PC-9 (cell line): ENCODE measurements at regions of chr4 and their contacts with region 1.

Region 1: GRCh38 chr4:145481164-145481941 is at the start of gene SMAD1:
- DNase-seq: peak; percentile 38 to 74
- H3K4me3 ChIP-seq: peak within 1 kb of the TSS; percentile 86
- H3K27ac ChIP-seq: peak within 1 kb of the TSS; percentile 71
- H3K4me1 ChIP-seq: peaks cover 22% of the 10 kb centered on the region
- H3K27me3 ChIP-seq: no peaks in the 10 kb centered on the region
- CTCF ChIP-seq: no peak
- total RNA-seq, gene SMAD1: 15.1 and 16.1 TPM in 2 replicates

Region 2: GRCh38 chr4:145234091-145234706 is 247.2 kb before region 1 on chr4:
- CTCF ChIA-PET with region 1: no interaction called
- POLR2A ChIA-PET with region 1: no interaction called
- intact Hi-C with region 1: loop called (anchors 5 kb)
- DNase-seq: peak; percentile 45 to 53
- H3K4me3 ChIP-seq: no peak overlapping the region
- H3K27ac ChIP-seq: no peak overlapping the region
- H3K4me1 ChIP-seq: no peaks in the 10 kb centered on the region
- H3K27me3 ChIP-seq: no peaks in the 10 kb centered on the region
- CTCF ChIP-seq: peak; percentile 81

Region 3: DNA sequence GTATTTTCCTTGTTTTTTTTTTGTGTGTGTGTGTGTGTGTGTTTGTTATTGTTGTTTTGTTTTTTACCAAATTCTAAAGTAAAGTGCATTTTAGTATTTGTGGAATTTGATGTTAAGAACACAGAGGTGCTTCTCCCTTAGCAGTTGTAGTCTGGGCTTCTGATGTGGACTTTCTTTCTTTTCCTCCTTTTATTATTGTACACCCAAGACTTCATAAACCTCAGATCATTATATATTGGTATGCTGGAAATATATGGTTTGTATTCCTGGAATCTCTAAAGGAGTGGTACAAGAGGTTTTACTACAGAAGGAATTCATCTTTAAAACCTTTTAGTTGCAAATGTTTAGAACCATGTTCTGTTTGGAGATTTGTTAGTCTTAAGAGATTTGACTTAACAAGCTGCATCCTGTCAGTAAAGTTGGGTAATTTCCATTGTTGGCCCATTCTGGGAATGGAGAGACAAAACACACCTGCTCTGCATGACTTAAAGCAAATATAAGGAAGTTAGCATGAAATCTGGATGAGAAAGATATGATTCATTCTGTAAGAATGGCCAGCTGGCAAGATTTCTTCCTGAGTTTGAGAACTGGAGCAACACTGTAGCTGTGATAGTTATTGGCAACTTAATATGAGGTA is 64.3 kb after region 1 on chr4:
- CTCF ChIA-PET with region 1: no interaction called
- POLR2A ChIA-PET with region 1: no interaction called
- intact Hi-C with region 1: loop called (anchors 5 kb)
- DNase-seq: peak; percentile 34 to 93
- H3K4me3 ChIP-seq: no peak overlapping the region
- H3K27ac ChIP-seq: peak overlapping the region; percentile 75
- H3K4me1 ChIP-seq: peaks cover 23% of the 10 kb centered on the region
- H3K27me3 ChIP-seq: no peaks in the 10 kb centered on the region
- CTCF ChIP-seq: no peak